ENCODE measurements at regions of chr10 and their contacts with region 1.

Region 1: GRCh38 chr10:91493313-91493712 is 83.2 kb downstream of the HECTD2 start:
- DNase-seq: no peak
- H3K4me3 ChIP-seq: no peak overlapping the region
- H3K27ac ChIP-seq: no peak overlapping the region
- H3K4me1 ChIP-seq: no peaks in the 10 kb centered on the region
- H3K27me3 ChIP-seq: no peaks in the 10 kb centered on the region
- CTCF ChIP-seq: peak; percentile 42 to 62 (median 55)

Region 2: GRCh38 chr10:91444211-91445182 is 48.8 kb before region 1 on chr10:
- intact Hi-C with region 1: no loop called
- DNase-seq: no peak
- H3K4me3 ChIP-seq: no peak overlapping the region
- H3K27ac ChIP-seq: no peak overlapping the region
- H3K4me1 ChIP-seq: no peaks in the 10 kb centered on the region
- H3K27me3 ChIP-seq: no peaks in the 10 kb centered on the region
- CTCF ChIP-seq: no peak

Region 3: DNA sequence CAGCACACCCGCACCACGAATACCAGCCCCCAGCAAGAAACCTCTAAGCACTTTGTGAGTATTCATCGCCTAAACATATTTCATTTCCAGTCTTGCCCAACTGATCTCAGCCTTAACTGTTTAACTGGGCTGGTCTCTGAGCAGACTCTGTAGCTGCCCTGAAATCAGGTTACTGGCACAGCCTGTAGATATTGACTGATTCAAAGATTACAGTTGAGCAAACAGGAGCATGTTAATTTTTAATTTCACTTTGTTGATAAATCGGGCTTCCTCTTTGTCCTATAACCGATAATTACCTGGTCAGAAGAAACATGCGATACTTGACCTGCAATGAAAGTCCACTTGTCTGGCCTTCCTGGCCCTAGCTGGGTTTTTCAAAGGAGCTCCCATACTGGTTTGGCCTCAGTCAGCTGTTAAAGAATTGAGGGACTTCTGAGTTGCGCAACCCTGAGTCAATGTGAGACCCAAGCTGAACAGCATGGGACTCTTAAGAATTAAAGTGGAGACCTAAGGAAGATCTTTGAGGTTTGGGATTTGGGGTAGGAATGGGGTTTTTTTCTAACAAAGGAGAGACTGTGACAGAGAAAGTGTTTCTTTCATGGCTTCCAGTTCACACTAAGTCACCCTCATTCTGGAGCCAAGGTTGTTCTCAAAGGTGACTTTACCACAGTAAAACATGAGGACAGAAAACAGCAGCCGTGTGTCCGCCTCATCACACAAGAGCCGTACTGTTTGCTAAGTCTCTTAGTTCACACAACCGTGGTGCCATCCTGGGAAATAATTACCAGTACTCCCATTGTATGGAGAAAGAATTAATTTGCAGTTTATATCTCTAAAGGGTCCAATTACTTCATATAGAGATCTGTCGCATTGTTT is 63.6 kb after region 1 on chr10:
- intact Hi-C with region 1: loop called (anchors 5 kb)
- DNase-seq: no peak
- H3K4me3 ChIP-seq: no peak overlapping the region
- H3K27ac ChIP-seq: peak overlapping the region; percentile 60 to 65
- H3K4me1 ChIP-seq: peaks cover 0 to 10% of the 10 kb centered on the region in 2 donors
- H3K27me3 ChIP-seq: no peaks in the 10 kb centered on the region
- CTCF ChIP-seq: no peak

Region 4: GRCh38 chr10:91579329-91579985 is 86.1 kb after region 1 on chr10:
- intact Hi-C with region 1: no loop called
- DNase-seq: no peak
- H3K4me3 ChIP-seq: no peak overlapping the region
- H3K27ac ChIP-seq: peak overlapping the region; percentile 74 to 75
- H3K4me1 ChIP-seq: peaks cover 0 to 21% of the 10 kb centered on the region in 2 donors
- H3K27me3 ChIP-seq: no peaks in the 10 kb centered on the region
- CTCF ChIP-seq: no peak

Region 5: GRCh38 chr10:91665842-91666241 is 172.5 kb after region 1 on chr10:
- intact Hi-C with region 1: no loop called
- DNase-seq: no peak
- H3K4me3 ChIP-seq: no peak overlapping the region
- H3K27ac ChIP-seq: no peak overlapping the region
- H3K4me1 ChIP-seq: no peaks in the 10 kb centered on the region
- H3K27me3 ChIP-seq: no peaks in the 10 kb centered on the region
- CTCF ChIP-seq: no peak

Region 6: DNA sequence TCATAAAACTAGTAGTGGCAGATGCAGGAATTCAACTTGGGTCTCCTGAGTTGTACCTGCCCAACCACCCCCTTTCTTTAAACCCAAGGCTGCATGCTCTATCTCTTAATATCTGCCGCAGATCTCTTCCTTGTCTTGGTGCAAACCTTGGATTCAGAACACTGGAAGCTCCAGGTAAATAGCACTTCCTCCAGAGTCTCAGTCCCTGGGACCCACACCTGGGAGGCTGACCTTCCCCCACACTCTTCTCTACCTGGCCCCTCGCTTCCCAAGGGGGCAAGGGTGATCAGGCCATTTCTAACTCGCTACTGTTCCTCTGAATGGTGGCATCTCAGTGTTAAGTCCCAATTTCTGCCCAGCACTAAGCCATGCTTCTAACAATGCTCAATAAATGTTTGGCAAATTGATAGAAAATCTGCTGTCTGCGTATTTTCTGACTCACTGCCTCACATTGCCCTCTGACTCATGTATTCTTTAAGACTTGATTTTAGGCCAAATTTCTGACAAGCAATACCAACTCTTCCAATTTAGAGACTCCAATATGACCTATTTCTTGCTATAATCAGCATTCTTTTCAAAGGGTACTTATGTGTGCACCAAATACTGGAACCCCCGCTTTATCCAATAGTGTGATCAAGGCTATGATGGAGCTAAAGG is 207.6 kb after region 1 on chr10:
- intact Hi-C with region 1: loop called (anchors 5 kb)
- DNase-seq: no peak
- H3K4me3 ChIP-seq: no peak overlapping the region
- H3K27ac ChIP-seq: peak overlapping the region in 1 of 2 donors; percentile 21
- H3K4me1 ChIP-seq: peaks cover 0 to 7% of the 10 kb centered on the region in 2 donors
- H3K27me3 ChIP-seq: no peaks in the 10 kb centered on the region
- CTCF ChIP-seq: no peak

Region 7: GRCh38 chr10:91745074-91745832 is 251.9 kb after region 1 on chr10:
- intact Hi-C with region 1: loop called (anchors 5 kb)
- DNase-seq: no peak
- H3K4me3 ChIP-seq: no peak overlapping the region
- H3K27ac ChIP-seq: no peak overlapping the region
- H3K4me1 ChIP-seq: no peaks in the 10 kb centered on the region
- H3K27me3 ChIP-seq: no peaks in the 10 kb centered on the region
- CTCF ChIP-seq: peak in 2 of 3 experiments; percentile 18 to 45